K562 (cell line): ENCODE measurements at regions of chr19 and their contacts with region 1.

Region 1: DNA sequence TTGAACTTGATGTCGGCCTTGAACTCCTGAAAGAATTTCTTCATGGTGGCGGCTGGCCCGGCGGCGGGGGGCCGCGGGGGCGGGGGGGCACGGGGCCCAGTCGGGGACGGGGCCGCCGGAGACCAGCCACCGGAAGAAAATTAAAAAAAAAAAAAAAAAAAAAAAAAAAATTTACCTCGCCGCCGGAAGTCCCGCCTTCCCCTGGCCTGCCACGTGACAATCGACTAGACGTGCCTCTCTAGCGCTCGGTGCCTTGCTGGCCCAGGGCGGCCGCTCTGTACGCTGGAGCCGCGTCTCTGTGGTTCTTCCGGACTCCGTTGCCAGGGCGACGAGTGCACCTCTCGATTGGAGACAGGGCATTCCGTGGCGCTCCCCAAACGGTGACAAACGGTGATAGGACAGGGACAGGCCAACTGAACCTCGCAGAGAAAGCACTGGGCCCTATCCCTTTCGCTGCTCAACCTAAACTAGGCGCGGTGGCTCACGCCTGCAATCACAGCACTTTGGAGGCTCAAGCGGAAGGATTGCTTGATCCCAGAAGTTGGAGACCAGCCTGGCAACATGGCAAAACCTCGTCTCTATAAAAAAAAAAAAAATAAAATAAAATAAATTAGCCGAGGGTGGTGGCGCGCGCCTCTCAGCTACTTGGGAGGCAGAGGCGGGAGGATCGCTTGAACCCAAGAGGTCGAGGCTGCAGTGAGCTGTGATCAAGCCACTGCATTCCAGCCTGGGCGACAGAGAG is at the start of gene UBXN6:
- DNase-seq: peak; percentile 84 to 99 (median 92)
- ATAC-seq: peak; percentile 77
- H3K4me3 ChIP-seq: peak within 1 kb of the TSS; percentile 67
- H3K27ac ChIP-seq: peak within 1 kb of the TSS; percentile 76
- H3K4me1 ChIP-seq: peaks cover 21 to 52% of the 10 kb centered on the region in 2 experiments
- H3K27me3 ChIP-seq: no peaks in the 10 kb centered on the region
- CTCF ChIP-seq: no peak
- EP300 ChIP-seq: peak; percentile 59
- POLR2A ChIP-seq: no peak
- RAD21 ChIP-seq: no peak
- polyA plus RNA-seq, gene UBXN6: 0.48 to 1.8 TPM

Region 2: GRCh38 chr19:4471403-4472173 is 13.8 kb after region 1 on chr19:
- CTCF ChIA-PET with region 1: no interaction called
- POLR2A ChIA-PET with region 1: interaction called, 44 read pairs
- in situ Hi-C with region 1: no loop called
- intact Hi-C with region 1: no loop called
- DNase-seq: peak; percentile 95 to 99 (median 98)
- ATAC-seq: peak; percentile 94
- H3K4me3 ChIP-seq: peak overlapping the region; percentile 94
- H3K27ac ChIP-seq: peak overlapping the region; percentile 98
- H3K4me1 ChIP-seq: peaks cover 3 to 32% of the 10 kb centered on the region in 2 experiments; a peak in 4 of 5 replicates
- H3K27me3 ChIP-seq: no peaks in the 10 kb centered on the region
- CTCF ChIP-seq: no peak
- EP300 ChIP-seq: no peak
- POLR2A ChIP-seq: peak; percentile 85
- RAD21 ChIP-seq: no peak

Region 3: DNA sequence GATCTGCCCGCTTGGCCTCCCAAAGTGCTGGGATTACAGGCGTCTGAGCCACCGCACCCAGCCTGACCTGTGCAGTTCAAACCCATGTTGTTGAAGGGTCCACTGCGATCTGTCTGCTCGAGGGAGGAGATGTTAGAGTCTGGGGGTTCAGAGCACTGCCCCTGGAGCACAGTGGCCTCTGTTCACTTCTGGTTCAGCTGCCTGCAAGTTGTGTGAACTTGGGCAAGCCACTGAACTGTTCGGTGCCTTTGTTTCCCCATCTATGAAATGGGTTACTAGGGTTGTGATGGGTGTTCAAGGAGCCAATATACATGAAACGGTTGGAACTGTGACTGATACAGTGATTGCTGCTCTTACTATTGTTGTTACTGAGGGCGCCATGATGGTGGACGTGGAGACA is 75.5 kb after region 1 on chr19:
- CTCF ChIA-PET with region 1: no interaction called
- POLR2A ChIA-PET with region 1: no interaction called
- in situ Hi-C with region 1: no loop called
- intact Hi-C with region 1: no loop called
- DNase-seq: no peak
- ATAC-seq: no peak
- H3K4me3 ChIP-seq: no peak overlapping the region
- H3K27ac ChIP-seq: no peak overlapping the region
- H3K4me1 ChIP-seq: peaks cover 0 to 40% of the 10 kb centered on the region in 2 experiments; a peak in 3 of 5 replicates
- H3K27me3 ChIP-seq: peaks cover 0 to 6% of the 10 kb centered on the region in 2 experiments; a peak in 3 of 5 replicates
- CTCF ChIP-seq: no peak
- EP300 ChIP-seq: no peak
- POLR2A ChIP-seq: no peak
- RAD21 ChIP-seq: no peak

Region 4: GRCh38 chr19:4606921-4607678 is 149.3 kb after region 1 on chr19:
- CTCF ChIA-PET with region 1: no interaction called
- POLR2A ChIA-PET with region 1: no interaction called
- in situ Hi-C with region 1: no loop called
- intact Hi-C with region 1: no loop called
- DNase-seq: peak in 3 of 4 experiments; percentile 39 to 57 (median 55)
- ATAC-seq: peak; percentile 68
- H3K4me3 ChIP-seq: no peak overlapping the region
- H3K27ac ChIP-seq: no peak overlapping the region
- H3K4me1 ChIP-seq: peaks cover 5 to 12% of the 10 kb centered on the region in 2 experiments; a peak in 3 of 5 replicates
- H3K27me3 ChIP-seq: peaks cover 0 to 3% of the 10 kb centered on the region in 2 experiments; a peak in 1 of 5 replicates
- CTCF ChIP-seq: no peak
- EP300 ChIP-seq: no peak
- POLR2A ChIP-seq: no peak
- RAD21 ChIP-seq: no peak

Region 5: DNA sequence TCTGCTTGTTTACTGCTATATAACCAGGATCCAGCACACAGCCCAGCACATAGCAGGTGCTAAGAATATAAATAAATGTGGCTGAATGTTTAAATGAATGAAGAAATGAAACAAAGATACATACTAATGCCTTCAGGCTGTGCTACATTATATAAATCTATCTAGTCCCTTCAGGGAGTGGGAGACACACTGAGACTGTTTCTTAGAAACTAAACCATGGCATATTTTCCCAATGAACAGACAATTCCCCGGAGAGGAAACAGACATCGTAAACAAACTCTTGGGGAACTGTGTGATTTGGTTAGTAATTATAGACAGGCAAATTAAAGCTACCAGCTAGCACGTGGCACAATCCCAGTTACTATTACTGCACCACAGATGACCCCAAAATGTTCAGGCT is 324.0 kb after region 1 on chr19:
- CTCF ChIA-PET with region 1: no interaction called
- POLR2A ChIA-PET with region 1: no interaction called
- in situ Hi-C with region 1: no loop called
- intact Hi-C with region 1: no loop called
- DNase-seq: no peak
- ATAC-seq: no peak
- H3K4me3 ChIP-seq: no peak overlapping the region
- H3K27ac ChIP-seq: no peak overlapping the region
- H3K4me1 ChIP-seq: peaks cover 0 to 9% of the 10 kb centered on the region in 2 experiments; a peak in 2 of 5 replicates
- H3K27me3 ChIP-seq: peaks cover 14 to 50% of the 10 kb centered on the region in 2 experiments
- CTCF ChIP-seq: no peak
- EP300 ChIP-seq: no peak
- POLR2A ChIP-seq: no peak
- RAD21 ChIP-seq: no peak